Activated naive CD4-positive, alpha-beta T cell treated with anti-CD3 and anti-CD28 coated beads for 36 hours (primary cell): ENCODE measurements at regions of chr2 and their contacts with region 1.

Region 1: GRCh38 chr2:85611705-85612587 is at the start of gene C2orf68:
- DNase-seq: peak; percentile 93
- H3K4me3 Mint-ChIP-seq: peak within 1 kb of the TSS; percentile 98
- H3K27ac Mint-ChIP-seq: peak within 1 kb of the TSS; percentile 94
- H3K4me1 Mint-ChIP-seq: peaks cover 25% of the 10 kb centered on the region
- H3K27me3 Mint-ChIP-seq: no peaks in the 10 kb centered on the region
- total RNA-seq, gene C2orf68: 29.3 to 31.0 TPM

Region 2: DNA sequence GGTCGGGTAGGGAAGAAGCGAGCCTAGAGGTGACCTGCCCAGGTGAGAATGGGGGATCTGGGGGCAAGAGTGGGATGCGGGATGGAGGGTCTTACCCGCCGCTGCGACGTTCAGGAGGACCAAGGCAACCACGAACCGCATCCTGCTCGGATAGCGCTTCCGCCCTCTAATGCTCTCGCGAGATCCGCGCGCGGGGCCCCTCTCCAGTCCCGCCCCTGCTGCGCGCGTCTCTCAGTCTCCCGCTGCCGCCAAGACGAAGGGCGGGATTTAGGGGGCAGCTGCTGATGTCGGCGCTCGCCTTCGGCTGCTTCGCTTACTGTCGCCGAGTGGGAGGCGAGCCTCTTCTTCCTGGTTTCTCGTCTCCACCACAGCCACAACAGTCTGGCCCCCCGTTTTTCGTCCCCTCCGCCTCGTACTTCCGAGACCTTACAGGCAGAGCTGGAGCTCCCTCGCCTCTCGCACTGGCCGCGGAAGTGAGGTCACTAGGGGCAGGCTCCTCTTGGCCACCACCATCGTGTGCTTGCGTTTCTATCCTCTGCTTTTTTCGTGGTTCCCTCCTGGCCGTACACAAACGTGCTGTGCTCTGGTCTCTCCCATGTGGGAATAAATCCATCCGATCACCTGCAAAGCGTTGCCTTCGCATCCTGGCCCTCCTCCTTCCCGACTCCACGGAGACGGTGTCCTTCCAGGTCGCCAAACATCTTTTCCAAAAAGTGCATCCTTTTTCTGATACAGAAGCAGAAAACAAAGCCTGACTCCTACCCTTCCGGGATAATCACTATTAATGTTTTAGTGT is 283.9 kb before region 1 on chr2 and contains the start of gene TGOLN2:
- CTCF ChIA-PET with region 1: no interaction called
- intact Hi-C with region 1: loop called (anchors 1 kb)
- DNase-seq: peak; percentile 95
- H3K4me3 Mint-ChIP-seq: peak within 1 kb of the TSS; percentile 99
- H3K27ac Mint-ChIP-seq: peak within 1 kb of the TSS; percentile 99
- H3K4me1 Mint-ChIP-seq: peaks cover 25% of the 10 kb centered on the region
- H3K27me3 Mint-ChIP-seq: no peaks in the 10 kb centered on the region
- total RNA-seq, gene TGOLN2: 82.5 to 85.4 TPM

Region 3: DNA sequence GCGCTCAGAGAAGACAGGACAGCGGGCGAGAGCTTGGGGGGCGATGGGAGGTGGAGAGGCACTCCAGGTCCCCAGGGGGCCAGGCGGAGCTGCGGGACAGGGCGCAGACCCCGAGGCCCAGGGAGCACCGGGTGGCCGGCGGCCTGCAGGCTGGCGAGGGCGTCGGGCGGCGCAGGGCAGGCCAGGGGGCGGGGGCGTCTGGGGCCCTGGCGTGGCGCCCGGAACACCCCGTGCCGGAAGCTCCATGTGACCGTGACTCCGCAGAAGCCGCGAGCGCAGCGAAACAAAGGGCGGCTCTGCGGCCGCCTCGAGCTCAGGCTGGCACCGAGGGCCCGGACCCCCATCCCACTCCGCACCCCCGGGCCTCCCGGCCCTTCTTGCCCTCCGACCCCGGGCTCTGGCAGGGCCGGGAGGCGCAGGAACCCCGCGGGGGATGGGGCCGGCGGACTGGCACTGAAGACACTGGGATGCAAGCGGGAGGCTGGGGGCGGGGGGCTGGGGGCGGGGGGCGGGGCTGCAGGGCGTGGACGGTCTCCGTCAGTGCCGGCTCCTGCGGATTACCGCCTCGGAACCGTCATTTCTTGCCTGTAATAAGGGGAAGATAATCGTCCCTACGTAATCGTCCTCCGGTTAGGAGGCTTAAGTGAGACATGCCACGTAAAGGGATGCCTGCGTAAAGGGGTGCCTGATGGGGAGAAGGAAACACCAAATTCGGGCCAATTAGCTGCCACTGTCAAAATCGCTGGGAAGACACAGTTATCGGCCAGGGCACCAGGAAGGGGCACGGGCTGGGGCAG is 174.3 kb before region 1 on chr2:
- CTCF ChIA-PET with region 1: no interaction called
- intact Hi-C with region 1: loop called (anchors 1 kb)
- DNase-seq: peak; percentile 87
- H3K4me3 Mint-ChIP-seq: peak overlapping the region; percentile 77
- H3K27ac Mint-ChIP-seq: peak overlapping the region; percentile 89
- H3K4me1 Mint-ChIP-seq: peaks cover 26% of the 10 kb centered on the region
- H3K27me3 Mint-ChIP-seq: no peaks in the 10 kb centered on the region

Region 4: GRCh38 chr2:85561317-85561979 is 50.5 kb before region 1 on chr2 and contains the start of gene GGCX:
- CTCF ChIA-PET with region 1: no interaction called
- intact Hi-C with region 1: loop called (anchors 1 kb)
- DNase-seq: peak; percentile 97
- H3K4me3 Mint-ChIP-seq: peak within 1 kb of the TSS; percentile 90
- H3K27ac Mint-ChIP-seq: peak within 1 kb of the TSS; percentile 85
- H3K4me1 Mint-ChIP-seq: peaks cover 34% of the 10 kb centered on the region
- H3K27me3 Mint-ChIP-seq: no peaks in the 10 kb centered on the region
- total RNA-seq, gene GGCX: 17.5 to 18.8 TPM

Region 5: DNA sequence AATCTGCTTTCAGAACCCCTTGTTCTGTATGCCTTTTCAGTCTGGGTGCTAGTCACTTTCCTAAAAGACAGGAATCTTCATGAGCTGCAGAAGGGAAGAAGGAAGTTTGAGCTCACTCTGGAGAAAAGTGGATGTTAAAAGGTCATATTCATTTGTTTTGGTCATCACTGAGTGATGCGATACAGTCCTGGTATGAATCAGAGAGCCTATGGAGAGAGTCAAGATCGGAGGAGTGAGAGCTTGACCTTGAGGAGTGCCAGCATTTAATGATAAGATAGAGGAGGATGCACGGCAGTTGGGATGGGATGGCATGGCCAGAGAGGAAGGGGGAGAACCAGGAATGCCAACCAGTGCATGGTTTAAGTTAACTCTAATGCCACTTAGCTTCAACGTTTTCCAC is 23.7 kb after region 1 on chr2:
- CTCF ChIA-PET with region 1: interaction called, 25 read pairs
- intact Hi-C with region 1: no loop called
- DNase-seq: no peak
- H3K4me3 Mint-ChIP-seq: no peak overlapping the region
- H3K27ac Mint-ChIP-seq: no peak overlapping the region
- H3K4me1 Mint-ChIP-seq: peaks cover 9% of the 10 kb centered on the region
- H3K27me3 Mint-ChIP-seq: no peaks in the 10 kb centered on the region

Region 6: GRCh38 chr2:86562922-86563649 is 951.1 kb after region 1 on chr2 and contains the start of gene CHMP3:
- CTCF ChIA-PET with region 1: no interaction called
- intact Hi-C with region 1: loop called (anchors 5 kb)
- DNase-seq: peak; percentile 97
- H3K4me3 Mint-ChIP-seq: peak within 1 kb of the TSS; percentile 92
- H3K27ac Mint-ChIP-seq: peak within 1 kb of the TSS; percentile 99
- H3K4me1 Mint-ChIP-seq: peaks cover 25% of the 10 kb centered on the region
- H3K27me3 Mint-ChIP-seq: no peaks in the 10 kb centered on the region
- total RNA-seq, gene CHMP3: 27.0 to 29.6 TPM